ENCODE measurements at regions of chr1 and their contacts with region 1.

Region 1: DNA sequence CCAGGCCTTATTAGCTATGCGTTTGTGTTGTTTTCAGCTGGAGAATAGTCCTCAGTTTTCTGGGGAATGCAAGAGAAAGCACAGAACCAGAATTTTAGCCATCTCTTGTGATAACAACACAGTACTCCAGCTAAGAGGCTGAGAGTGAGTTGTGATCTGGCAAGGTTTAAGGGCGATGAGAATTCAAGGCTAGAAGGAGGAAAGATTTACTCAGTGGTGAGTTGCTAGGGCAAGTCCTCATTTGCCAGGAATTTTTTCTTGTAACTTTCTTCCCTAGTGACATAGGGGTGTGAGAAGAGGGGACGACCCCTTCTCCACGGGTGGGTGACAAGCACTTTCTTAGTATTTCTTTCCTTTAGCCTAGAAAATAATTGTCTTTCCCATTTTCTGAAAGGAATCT is 53.2 kb downstream of the HHAT start:
- DNase-seq: no peak

Region 2: DNA sequence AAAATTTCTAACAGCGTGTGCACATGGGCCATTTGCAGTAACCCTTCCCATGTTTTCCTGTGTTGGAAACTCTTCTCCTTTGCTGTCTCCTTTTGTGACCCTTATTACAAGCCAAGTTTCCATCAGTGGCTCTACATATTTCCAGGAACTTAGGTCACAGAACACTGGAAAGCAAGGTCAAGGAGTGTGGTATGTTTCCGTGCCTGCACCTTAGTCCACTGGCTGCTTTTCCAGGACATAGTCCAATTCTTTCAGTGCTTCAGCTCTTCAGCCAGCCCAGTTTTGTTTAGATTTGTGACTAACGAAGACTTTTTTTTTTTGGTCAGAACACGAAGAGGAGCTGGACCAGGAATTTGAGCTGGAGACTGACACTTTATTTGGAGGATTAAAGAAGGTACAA is 19.4 kb before region 1 on chr1:
- intact Hi-C with region 1: loop called in 1 of 2 experiments (anchors 1 kb)
- DNase-seq: no peak

Measured in posterior vena cava (tissue), 2 donors.